BJ (cell line): ENCODE measurements at regions of chr6 and their contacts with region 1.

Region 1: DNA sequence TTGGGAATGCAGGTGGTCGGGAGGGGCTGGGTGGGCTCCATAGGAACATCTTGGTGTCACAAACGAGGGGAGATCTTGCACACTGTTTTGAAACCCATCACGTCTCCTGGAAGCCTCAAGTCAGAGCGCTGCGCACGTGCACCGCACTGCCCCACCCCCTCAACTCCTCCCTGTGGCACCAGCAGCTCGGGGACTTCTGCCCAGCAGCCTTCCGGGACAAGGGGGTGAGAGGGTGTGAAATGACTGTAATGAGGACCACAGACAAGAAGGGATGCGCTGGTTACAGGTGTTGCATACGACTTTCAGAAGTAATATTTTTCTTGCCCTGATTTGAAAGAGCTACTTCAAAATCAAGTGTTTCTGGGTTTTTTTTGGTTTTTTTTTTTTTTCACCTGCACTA is 60.3 kb downstream of the FOXC1 start:
- DNase-seq: no peak
- H3K4me3 ChIP-seq: no peak overlapping the region
- H3K27me3 ChIP-seq: no peaks in the 10 kb centered on the region
- CTCF ChIP-seq: no peak

Region 2: GRCh38 chr6:1686117-1687098 is 16.4 kb after region 1 on chr6:
- CTCF ChIA-PET with region 1: interaction called, 5 read pairs
- POLR2A ChIA-PET with region 1: interaction called, 14 read pairs
- DNase-seq: peak; percentile 99
- H3K4me3 ChIP-seq: no peak overlapping the region
- H3K27me3 ChIP-seq: no peaks in the 10 kb centered on the region
- CTCF ChIP-seq: peak; percentile 36; the same call in 1 of the 2 replicates